ENCODE measurements at regions of chr9 and their contacts with region 1.

Region 1: GRCh38 chr9:68704814-68705530 is at the start of gene PIP5K1B:
- DNase-seq: no peak
- ATAC-seq: peak; percentile 87
- H3K4me3 ChIP-seq: peak within 1 kb of the TSS; percentile 98
- H3K27ac ChIP-seq: peak within 1 kb of the TSS; percentile 72
- H3K4me1 ChIP-seq: peaks cover 28% of the 10 kb centered on the region
- H3K27me3 ChIP-seq: peaks cover 3 to 5% of the 10 kb centered on the region in 2 experiments
- CTCF ChIP-seq: 0 out of 6 replicates have a peak, but pooled peaks of 2 of the 3 experiments have one; percentile 2
- EP300 ChIP-seq: no peak
- POLR2A ChIP-seq: peak; percentile 59
- RAD21 ChIP-seq: no peak
- polyA plus RNA-seq, gene PIP5K1B: 6.8 to 10.9 TPM

Region 2: GRCh38 chr9:68653141-68653595 is 51.8 kb before region 1 on chr9:
- CTCF ChIA-PET with region 1: no interaction called
- POLR2A ChIA-PET with region 1: interaction called, 3 read pairs
- RAD21 ChIA-PET with region 1: no interaction called
- SMC1A ChIA-PET with region 1: no interaction called
- in situ Hi-C with region 1: no loop called
- intact Hi-C with region 1: loop called (anchors 5 kb)
- DNase-seq: peak; percentile 72
- ATAC-seq: peak; percentile 93
- H3K4me3 ChIP-seq: no peak overlapping the region; the same call in 1 of the 2 replicates
- H3K27ac ChIP-seq: peak overlapping the region; percentile 51
- H3K4me1 ChIP-seq: peaks cover 21% of the 10 kb centered on the region; the same call in 1 of the 2 replicates
- H3K27me3 ChIP-seq: no peaks in the 10 kb centered on the region
- CTCF ChIP-seq: peak in 2 of 3 experiments; percentile 6 to 28; a peak in 2 of 6 replicates
- EP300 ChIP-seq: peak in 1 of 2 experiments; percentile 87; a peak in 3 of 4 replicates
- POLR2A ChIP-seq: no peak
- RAD21 ChIP-seq: 0 out of 2 replicates have a peak, but pooled peaks have one; percentile 31

Region 3: DNA sequence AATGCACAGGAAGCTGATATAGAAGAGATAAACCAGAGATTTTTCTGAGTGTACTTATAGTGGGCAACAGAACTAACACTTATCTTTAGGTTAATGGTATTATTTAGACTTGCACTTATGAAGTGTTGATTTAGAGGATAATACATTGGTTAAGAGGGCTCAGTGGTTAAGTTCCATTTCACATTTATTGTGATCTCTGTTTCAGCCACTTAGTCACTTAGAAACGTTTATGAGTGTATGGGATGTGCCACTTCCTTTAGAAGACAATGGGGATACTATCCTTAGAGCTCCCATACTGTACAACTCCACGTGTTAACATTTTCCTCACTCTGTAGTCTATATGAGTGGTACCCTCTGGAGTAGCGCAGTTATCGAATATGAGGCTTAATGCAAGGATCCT is 57.6 kb after region 1 on chr9:
- CTCF ChIA-PET with region 1: no interaction called
- POLR2A ChIA-PET with region 1: no interaction called
- RAD21 ChIA-PET with region 1: interaction called, 4 read pairs
- SMC1A ChIA-PET with region 1: interaction called, 3 read pairs
- in situ Hi-C with region 1: no loop called
- intact Hi-C with region 1: loop called (anchors 5 kb)
- DNase-seq: no peak
- ATAC-seq: peak; percentile 51; the same call in 2 of the 3 replicates
- H3K4me3 ChIP-seq: no peak overlapping the region
- H3K27ac ChIP-seq: no peak overlapping the region
- H3K4me1 ChIP-seq: peaks cover 3% of the 10 kb centered on the region; the same call in 1 of the 2 replicates
- H3K27me3 ChIP-seq: no peaks in the 10 kb centered on the region
- CTCF ChIP-seq: no peak
- EP300 ChIP-seq: no peak
- POLR2A ChIP-seq: no peak
- RAD21 ChIP-seq: no peak

Region 4: DNA sequence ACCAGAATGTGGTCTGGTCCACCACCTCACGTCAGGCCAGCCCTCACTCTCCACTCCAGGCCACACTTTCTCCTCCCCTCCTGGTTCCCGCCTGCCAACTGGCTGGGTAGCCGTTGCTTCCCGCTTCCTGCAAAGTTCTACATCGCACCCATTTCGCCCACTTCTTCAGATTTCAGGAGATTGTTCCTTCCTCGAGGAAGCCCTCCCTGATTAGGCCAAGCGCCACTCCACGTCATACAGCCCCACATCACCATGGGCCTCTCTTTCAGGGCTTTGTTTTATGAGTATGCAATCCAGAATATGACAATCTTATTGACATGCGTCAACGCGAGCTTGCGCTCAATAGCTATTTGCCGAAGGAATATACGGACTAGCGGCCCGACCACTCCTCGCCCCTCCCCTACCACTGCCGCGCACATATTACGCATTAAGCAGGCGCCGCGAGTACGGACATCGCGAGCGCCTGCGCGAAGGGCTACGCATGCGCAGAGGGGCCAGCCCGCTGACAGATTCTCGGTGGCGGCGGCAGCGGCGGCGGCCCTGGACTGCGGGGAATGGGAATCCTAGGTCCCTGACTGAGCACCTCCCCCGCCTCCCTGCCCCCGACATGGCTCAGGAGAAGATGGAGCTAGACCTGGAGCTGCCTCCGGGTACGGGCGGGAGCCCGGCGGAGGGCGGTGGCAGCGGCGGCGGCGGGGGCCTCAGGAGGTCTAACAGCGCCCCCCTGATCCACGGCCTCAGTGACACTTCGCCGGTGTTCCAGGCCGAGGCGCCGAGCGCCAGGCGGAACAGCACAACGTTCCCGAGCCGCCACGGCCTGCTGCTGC is 74.8 kb after region 1 on chr9:
- CTCF ChIA-PET with region 1: interaction called, 3 read pairs
- POLR2A ChIA-PET with region 1: no interaction called
- RAD21 ChIA-PET with region 1: no interaction called
- SMC1A ChIA-PET with region 1: interaction called, 7 read pairs
- in situ Hi-C with region 1: no loop called
- intact Hi-C with region 1: loop called (anchors 2 kb)
- DNase-seq: peak; percentile 77
- ATAC-seq: peak; percentile 90
- H3K4me3 ChIP-seq: peak overlapping the region; percentile 83
- H3K27ac ChIP-seq: peak overlapping the region; percentile 92
- H3K4me1 ChIP-seq: peaks cover 2% of the 10 kb centered on the region; the same call in 1 of the 2 replicates
- H3K27me3 ChIP-seq: no peaks in the 10 kb centered on the region
- CTCF ChIP-seq: peak; percentile 31 to 56 (median 38); a peak in 5 of 6 replicates
- EP300 ChIP-seq: no peak
- POLR2A ChIP-seq: peak; percentile 93
- RAD21 ChIP-seq: peak; percentile 37

Region 5: DNA sequence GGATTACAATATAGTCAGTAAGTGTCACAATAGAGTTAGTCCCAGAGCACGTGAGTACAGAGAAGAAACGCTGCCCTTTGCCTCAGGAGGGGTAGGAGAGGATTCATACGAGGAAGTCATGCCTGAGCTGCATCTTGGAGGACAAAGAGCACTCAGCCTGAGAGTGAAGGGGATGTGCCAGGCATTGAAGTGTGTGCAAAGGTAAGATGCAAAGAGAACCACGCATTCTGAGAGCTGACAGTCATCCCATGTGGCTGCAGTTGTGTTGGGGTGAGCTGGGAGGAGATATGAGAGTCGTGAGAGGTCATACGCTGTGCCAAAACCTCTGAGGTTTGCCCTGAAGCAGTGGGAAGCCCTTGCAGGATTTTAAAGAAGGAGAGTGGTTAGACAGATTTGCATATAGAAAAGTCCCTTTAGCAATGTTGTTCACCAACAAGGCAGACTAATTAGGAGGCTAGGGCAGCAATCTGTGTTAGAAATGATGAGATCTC is 97.6 kb after region 1 on chr9:
- CTCF ChIA-PET with region 1: interaction called, 4 read pairs
- POLR2A ChIA-PET with region 1: no interaction called
- RAD21 ChIA-PET with region 1: interaction called, 5 read pairs
- SMC1A ChIA-PET with region 1: no interaction called
- in situ Hi-C with region 1: no loop called
- intact Hi-C with region 1: loop called (anchors 2 kb)
- DNase-seq: peak; percentile 91
- ATAC-seq: peak; percentile 98
- H3K4me3 ChIP-seq: peak overlapping the region; percentile 27; the same call in 1 of the 2 replicates
- H3K27ac ChIP-seq: peak overlapping the region; percentile 30; the same call in 1 of the 2 replicates
- H3K4me1 ChIP-seq: peaks cover 32% of the 10 kb centered on the region
- H3K27me3 ChIP-seq: no peaks in the 10 kb centered on the region
- CTCF ChIP-seq: no peak
- EP300 ChIP-seq: no peak; a peak in 1 of 4 replicates
- POLR2A ChIP-seq: 0 out of 2 replicates have a peak, but pooled peaks have one; percentile 41
- RAD21 ChIP-seq: 0 out of 2 replicates have a peak, but pooled peaks have one; percentile 6

Region 6: GRCh38 chr9:68844631-68845612 is 139.9 kb after region 1 on chr9:
- CTCF ChIA-PET with region 1: no interaction called
- POLR2A ChIA-PET with region 1: no interaction called
- RAD21 ChIA-PET with region 1: interaction called, 3 read pairs
- SMC1A ChIA-PET with region 1: interaction called, 3 read pairs
- in situ Hi-C with region 1: no loop called
- intact Hi-C with region 1: loop called (anchors 5 kb)
- DNase-seq: no peak
- ATAC-seq: peak; percentile 73
- H3K4me3 ChIP-seq: peak overlapping the region; percentile 21; the same call in 1 of the 2 replicates
- H3K27ac ChIP-seq: peak overlapping the region; percentile 32; the same call in 1 of the 2 replicates
- H3K4me1 ChIP-seq: peaks cover 19% of the 10 kb centered on the region
- H3K27me3 ChIP-seq: no peaks in the 10 kb centered on the region
- CTCF ChIP-seq: peak; percentile 52 to 63 (median 54)
- EP300 ChIP-seq: no peak
- POLR2A ChIP-seq: no peak
- RAD21 ChIP-seq: peak; percentile 69

Region 7: DNA sequence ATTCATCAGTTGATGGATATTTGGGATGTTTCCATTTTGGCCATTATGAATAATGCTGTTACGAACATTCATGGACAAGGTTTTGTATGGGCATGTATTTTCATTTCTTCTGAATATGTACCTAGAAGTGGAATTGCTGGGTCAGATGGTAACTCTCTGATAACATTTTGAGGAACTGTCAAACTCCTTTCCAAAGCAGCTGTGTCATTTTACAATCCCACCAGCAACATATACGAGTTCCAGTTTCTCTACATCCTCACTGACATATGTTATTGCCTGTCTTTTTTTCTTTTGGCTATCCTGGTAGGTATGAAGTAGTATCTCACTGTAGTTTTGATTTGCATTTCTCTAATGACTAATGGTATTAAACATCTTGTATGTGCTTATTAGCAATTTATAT is 222.2 kb after region 1 on chr9:
- CTCF ChIA-PET with region 1: no interaction called
- POLR2A ChIA-PET with region 1: no interaction called
- RAD21 ChIA-PET with region 1: no interaction called
- SMC1A ChIA-PET with region 1: no interaction called
- in situ Hi-C with region 1: no loop called
- intact Hi-C with region 1: no loop called
- DNase-seq: no peak
- ATAC-seq: no peak
- H3K4me3 ChIP-seq: no peak overlapping the region
- H3K27ac ChIP-seq: no peak overlapping the region
- H3K4me1 ChIP-seq: peaks cover 6% of the 10 kb centered on the region; the same call in 1 of the 2 replicates
- H3K27me3 ChIP-seq: no peaks in the 10 kb centered on the region
- CTCF ChIP-seq: no peak
- EP300 ChIP-seq: no peak
- POLR2A ChIP-seq: no peak
- RAD21 ChIP-seq: no peak

Measured in GM12878 (cell line).